Naive thymus-derived CD4-positive, alpha-beta T cell (primary cell): ENCODE measurements at regions of chr16 and their contacts with region 1.

Region 1: GRCh38 chr16:30557957-30558788 is at the start of gene ZNF764:
- DNase-seq: peak; percentile 79 to 95 (median 91)
- ATAC-seq: peak; percentile 95
- H3K4me3 ChIP-seq: peak within 1 kb of the TSS; percentile 92
- H3K4me3 Mint-ChIP-seq: peak within 1 kb of the TSS; percentile 83 to 92 (median 90)
- H3K27ac ChIP-seq: peak within 1 kb of the TSS; percentile 99
- H3K27ac Mint-ChIP-seq: peak within 1 kb of the TSS; percentile 87 to 94 (median 92)
- H3K4me1 ChIP-seq: peaks cover 12 to 15% of the 10 kb centered on the region in 2 donors
- H3K4me1 Mint-ChIP-seq: peaks cover 33 to 58% (median 43%) of the 10 kb centered on the region in 7 donors
- H3K27me3 ChIP-seq: no peaks in the 10 kb centered on the region
- H3K27me3 Mint-ChIP-seq: no peaks in the 10 kb centered on the region
- total RNA-seq, gene ZNF764: 11.9 to 20.9 (median 19.3) TPM

Region 2: DNA sequence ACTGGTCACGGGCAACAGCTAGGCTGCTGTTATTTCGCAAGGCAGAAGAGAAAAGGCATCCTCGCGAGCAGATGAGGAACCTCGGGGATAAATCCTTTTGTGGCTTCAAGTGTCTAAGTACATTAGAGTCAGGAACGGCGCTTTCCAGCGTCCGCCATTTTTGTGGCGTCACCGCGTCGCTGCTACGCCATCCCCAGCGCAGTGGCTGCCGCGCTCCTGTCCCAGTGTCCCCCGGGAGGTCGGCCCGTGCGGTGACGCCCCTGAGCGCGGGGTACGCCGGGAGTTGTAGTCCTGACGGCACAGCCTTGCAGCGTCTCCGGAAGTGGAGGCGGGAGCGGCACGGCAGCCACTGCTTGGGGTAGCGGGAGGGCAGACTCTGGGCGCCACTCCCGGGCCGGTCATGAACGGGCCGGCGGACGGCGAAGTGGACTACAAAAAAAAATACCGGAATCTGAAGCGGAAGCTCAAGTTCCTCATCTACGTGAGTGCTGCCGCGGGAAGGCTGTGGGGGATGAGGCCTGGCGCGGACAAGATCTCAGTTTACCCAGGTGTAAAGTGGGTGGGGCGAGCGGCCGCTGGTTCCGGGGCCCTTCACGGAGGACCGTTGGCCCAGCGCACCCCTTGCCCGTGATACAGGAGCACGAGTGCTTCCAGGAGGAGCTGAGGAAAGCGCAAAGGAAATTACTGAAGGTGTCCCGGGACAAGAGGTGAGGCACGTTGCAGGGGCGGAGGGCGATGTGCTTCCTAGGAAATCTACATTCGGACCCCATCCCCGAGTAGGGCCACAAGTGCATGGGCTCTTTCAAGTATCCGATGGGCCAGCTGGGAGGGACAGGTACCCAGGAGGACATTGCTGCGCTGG is 562.0 kb before region 1 on chr16 and contains the start of gene INO80E:
- CTCF ChIA-PET with region 1: no interaction called
- POLR2A ChIA-PET with region 1: no interaction called
- intact Hi-C with region 1: loop called in 1 of 2 experiments (anchors 1 kb)
- DNase-seq: peak; percentile 94 to 99 (median 98)
- ATAC-seq: peak; percentile 99
- H3K4me3 ChIP-seq: peak within 1 kb of the TSS; percentile 100
- H3K4me3 Mint-ChIP-seq: peak within 1 kb of the TSS; percentile 86 to 99 (median 98)
- H3K27ac ChIP-seq: peak within 1 kb of the TSS; percentile 99
- H3K27ac Mint-ChIP-seq: peak within 1 kb of the TSS; percentile 93 to 99 (median 97)
- H3K4me1 ChIP-seq: peaks cover 16 to 18% of the 10 kb centered on the region in 2 donors
- H3K4me1 Mint-ChIP-seq: peaks cover 24 to 53% (median 38%) of the 10 kb centered on the region in 7 donors
- H3K27me3 ChIP-seq: no peaks in the 10 kb centered on the region
- H3K27me3 Mint-ChIP-seq: no peaks in the 10 kb centered on the region
- total RNA-seq, gene INO80E: 71.7 to 141 (median 95.8) TPM

Region 3: GRCh38 chr16:30445408-30446202 is 112.6 kb before region 1 on chr16 and contains the start of gene SEPHS2:
- CTCF ChIA-PET with region 1: no interaction called
- POLR2A ChIA-PET with region 1: interaction called, 4 read pairs
- intact Hi-C with region 1: loop called in 1 of 2 experiments (anchors 1 kb)
- DNase-seq: peak; percentile 84 to 96 (median 94)
- ATAC-seq: peak; percentile 96
- H3K4me3 ChIP-seq: peak within 1 kb of the TSS; percentile 97
- H3K4me3 Mint-ChIP-seq: peak within 1 kb of the TSS; percentile 85 to 97 (median 95)
- H3K27ac ChIP-seq: peak within 1 kb of the TSS; percentile 92
- H3K27ac Mint-ChIP-seq: peak within 1 kb of the TSS; percentile 90 to 98 (median 96)
- H3K4me1 ChIP-seq: peaks cover 26 to 37% of the 10 kb centered on the region in 2 donors
- H3K4me1 Mint-ChIP-seq: peaks cover 30 to 47% (median 41%) of the 10 kb centered on the region in 7 donors
- H3K27me3 ChIP-seq: no peaks in the 10 kb centered on the region
- H3K27me3 Mint-ChIP-seq: no peaks in the 10 kb centered on the region
- total RNA-seq, gene SEPHS2: 20.9 to 69.6 (median 47.1) TPM

Region 4: DNA sequence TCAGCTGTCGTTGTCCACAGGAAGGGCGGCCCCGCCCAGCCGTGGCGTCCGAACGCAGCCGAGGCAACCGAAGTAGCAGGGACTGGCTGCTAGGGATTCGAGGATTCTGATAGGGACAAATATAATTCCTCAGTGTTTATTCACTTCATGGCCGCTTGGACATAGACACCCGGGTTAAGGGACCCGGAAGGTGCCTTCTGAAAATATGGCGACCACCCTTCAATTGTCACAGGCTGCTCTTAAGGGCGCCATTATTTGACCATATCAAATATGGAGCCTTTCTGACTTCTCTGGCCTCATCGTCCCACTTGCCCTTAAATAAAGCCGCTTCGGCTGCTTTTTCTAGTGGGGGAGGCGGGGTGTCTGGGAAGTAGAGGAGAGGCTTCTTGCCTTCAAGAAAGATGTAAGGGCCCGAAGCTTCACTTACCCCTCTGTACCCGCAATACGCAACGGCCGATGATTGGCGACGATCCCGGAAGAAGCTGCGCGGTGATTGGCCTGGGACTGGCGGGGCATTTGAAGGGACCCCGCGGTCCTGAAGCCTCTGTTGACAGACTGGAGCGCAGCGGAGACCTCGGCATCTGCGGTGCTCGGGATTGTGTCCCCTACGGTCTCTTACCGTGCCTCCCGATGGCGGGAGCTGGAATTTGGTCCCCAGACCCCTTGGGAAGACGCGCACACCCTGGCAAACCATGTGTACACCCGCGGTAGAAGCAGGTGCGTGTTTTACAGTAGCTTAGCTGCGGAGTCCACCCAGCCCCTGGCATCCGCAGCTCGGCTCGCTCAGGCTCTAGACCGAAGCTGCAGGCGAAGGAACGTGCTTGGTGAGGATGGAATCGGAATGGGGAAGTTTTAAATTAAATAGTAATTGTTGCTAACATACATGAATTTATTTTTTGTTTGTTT is 13.8 kb after region 1 on chr16 and contains the start of gene ZNF688:
- CTCF ChIA-PET with region 1: interaction called, 8 read pairs
- POLR2A ChIA-PET with region 1: interaction called, 149 read pairs
- intact Hi-C with region 1: loop called in 1 of 2 experiments (anchors 1 kb)
- DNase-seq: peak; percentile 74 to 99 (median 97)
- ATAC-seq: peak; percentile 89
- H3K4me3 ChIP-seq: peak within 1 kb of the TSS; percentile 88
- H3K4me3 Mint-ChIP-seq: peak within 1 kb of the TSS; percentile 87 to 98 (median 90)
- H3K27ac ChIP-seq: peak within 1 kb of the TSS; percentile 94
- H3K27ac Mint-ChIP-seq: peak within 1 kb of the TSS; percentile 92 to 98 (median 95)
- H3K4me1 ChIP-seq: peaks cover 36 to 38% of the 10 kb centered on the region in 2 donors
- H3K4me1 Mint-ChIP-seq: peaks cover 17 to 51% (median 39%) of the 10 kb centered on the region in 7 donors
- H3K27me3 ChIP-seq: no peaks in the 10 kb centered on the region
- H3K27me3 Mint-ChIP-seq: no peaks in the 10 kb centered on the region
- total RNA-seq, gene ZNF688: 8.8 to 24.3 (median 16.3) TPM

Region 5: DNA sequence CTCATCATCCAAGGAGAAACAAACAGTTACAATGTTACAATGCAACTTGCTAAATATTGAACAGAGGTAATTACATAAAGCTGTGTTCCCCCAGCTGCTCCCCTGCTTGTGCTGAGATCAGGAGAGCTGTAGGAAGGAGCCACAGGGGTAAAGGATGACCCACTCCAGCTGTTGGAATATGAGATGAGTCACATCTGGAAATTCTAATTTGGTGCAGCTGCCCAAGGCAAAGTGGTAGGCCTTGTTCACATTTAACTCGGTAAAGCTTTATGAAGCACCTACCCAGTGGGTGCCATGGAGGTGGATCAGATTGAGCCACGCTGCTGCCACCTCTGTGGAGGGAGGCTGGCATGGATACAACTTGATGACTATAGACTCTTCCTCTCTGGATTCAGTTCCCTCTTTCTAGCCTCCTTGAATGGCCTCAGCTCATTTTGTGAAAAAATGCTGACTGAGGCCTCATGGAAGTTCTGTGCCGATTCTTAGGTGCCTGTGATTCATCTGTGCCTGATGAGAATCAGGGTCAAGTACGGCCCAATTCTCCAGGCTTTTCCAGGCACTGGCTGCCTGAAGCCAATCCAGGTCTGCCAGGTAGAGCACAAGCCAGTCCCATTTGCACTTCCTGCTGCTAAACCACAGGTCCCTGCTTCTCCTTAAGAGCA is 44.6 kb after region 1 on chr16:
- CTCF ChIA-PET with region 1: interaction called, 4 read pairs
- POLR2A ChIA-PET with region 1: interaction called, 8 read pairs
- intact Hi-C with region 1: loop called in 1 of 2 experiments (anchors 1 kb)
- DNase-seq: no peak
- ATAC-seq: peak; percentile 49
- H3K4me3 ChIP-seq: no peak overlapping the region
- H3K4me3 Mint-ChIP-seq: no peak overlapping the region
- H3K27ac ChIP-seq: no peak overlapping the region
- H3K27ac Mint-ChIP-seq: no peak overlapping the region
- H3K4me1 ChIP-seq: no peaks in the 10 kb centered on the region
- H3K4me1 Mint-ChIP-seq: peaks cover 0 to 15% (median 11%) of the 10 kb centered on the region in 7 donors
- H3K27me3 ChIP-seq: no peaks in the 10 kb centered on the region
- H3K27me3 Mint-ChIP-seq: no peaks in the 10 kb centered on the region